Caco-2 (cell line): ENCODE measurements at regions of chr4 and their contacts with region 1.

Region 1: DNA sequence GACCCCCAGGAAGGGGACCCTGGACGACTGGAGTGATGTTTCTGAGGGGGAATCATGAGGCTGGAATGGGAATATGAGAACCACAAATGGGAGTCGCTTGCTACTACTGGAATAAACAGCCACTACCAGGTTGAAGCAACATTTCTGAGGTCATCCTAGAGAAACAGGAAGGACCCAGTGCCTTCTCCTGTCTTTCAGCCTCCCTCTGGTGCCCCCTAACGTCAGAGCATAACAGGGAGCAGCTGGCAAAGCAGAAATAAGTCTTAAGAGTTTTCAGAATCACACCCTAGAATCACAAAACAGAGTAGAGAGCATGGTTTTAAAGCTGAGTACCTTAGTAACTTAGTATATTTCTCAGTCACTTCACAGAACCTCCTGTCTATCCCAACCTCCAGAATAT is 347.8 kb upstream of the PITX2 start:
- DNase-seq: peak; percentile 79 to 85
- H3K4me3 ChIP-seq: no peak overlapping the region
- H3K4me3 Mint-ChIP-seq: no peak overlapping the region
- H3K27ac Mint-ChIP-seq: no peak overlapping the region
- H3K4me1 ChIP-seq: 0 out of 2 replicates have a peak, but pooled peaks cover 3% of the 10 kb centered on the region
- H3K4me1 Mint-ChIP-seq: no peaks in the 10 kb centered on the region
- H3K27me3 ChIP-seq: no peaks in the 10 kb centered on the region
- H3K27me3 Mint-ChIP-seq: no peaks in the 10 kb centered on the region
- CTCF ChIP-seq: peak; percentile 76 to 85

Region 2: DNA sequence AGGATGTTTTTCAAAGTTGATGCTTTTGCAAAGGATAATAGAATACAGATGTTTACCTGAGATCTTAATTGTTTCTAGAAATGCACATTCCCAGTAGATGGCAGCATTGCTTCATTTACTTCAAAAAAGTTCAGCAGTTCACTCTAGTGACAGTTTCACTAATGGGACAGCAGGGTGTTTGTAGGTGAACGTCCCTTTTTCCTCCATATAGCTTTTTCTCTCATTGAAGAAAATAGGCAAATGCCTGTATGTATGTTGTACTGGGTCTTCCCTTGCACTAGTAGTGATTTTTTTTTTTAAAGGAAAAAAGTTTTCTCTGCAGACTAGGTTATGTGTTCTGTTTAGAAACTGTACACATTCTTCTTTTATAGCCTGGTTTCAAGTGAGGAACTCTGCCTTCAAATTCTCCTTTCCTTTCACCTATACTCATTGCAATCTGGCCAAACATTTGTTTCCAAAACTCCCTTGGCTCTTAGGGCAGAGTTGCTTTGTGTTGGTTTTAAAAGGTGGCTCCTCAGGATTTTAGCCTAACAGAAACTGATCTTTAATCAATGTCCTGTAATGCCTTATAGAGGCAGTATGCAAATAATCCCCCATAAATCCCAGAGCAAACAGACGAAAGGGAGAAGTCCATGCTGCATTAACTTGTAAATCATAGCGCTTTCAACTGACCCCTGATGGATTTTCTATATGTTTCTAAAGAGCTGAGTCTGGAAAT is 971.6 kb before region 1 on chr4:
- CTCF ChIA-PET with region 1: no interaction called
- POLR2A ChIA-PET with region 1: no interaction called
- intact Hi-C with region 1: loop called (anchors 2 kb)
- DNase-seq: peak in 1 of 2 experiments; percentile 69
- H3K4me3 ChIP-seq: no peak overlapping the region
- H3K4me3 Mint-ChIP-seq: no peak overlapping the region
- H3K27ac Mint-ChIP-seq: no peak overlapping the region
- H3K4me1 ChIP-seq: peaks cover 6% of the 10 kb centered on the region
- H3K4me1 Mint-ChIP-seq: no peaks in the 10 kb centered on the region
- H3K27me3 ChIP-seq: no peaks in the 10 kb centered on the region
- H3K27me3 Mint-ChIP-seq: peaks cover 2% of the 10 kb centered on the region
- CTCF ChIP-seq: peak; percentile 44 to 73

Region 3: GRCh38 chr4:110516106-110516922 is 454.3 kb before region 1 on chr4:
- CTCF ChIA-PET with region 1: no interaction called
- POLR2A ChIA-PET with region 1: no interaction called
- intact Hi-C with region 1: loop called (anchors 5 kb)
- DNase-seq: peak; percentile 78
- H3K4me3 ChIP-seq: no peak overlapping the region
- H3K4me3 Mint-ChIP-seq: peak overlapping the region; percentile 64
- H3K27ac Mint-ChIP-seq: no peak overlapping the region
- H3K4me1 ChIP-seq: no peaks in the 10 kb centered on the region
- H3K4me1 Mint-ChIP-seq: no peaks in the 10 kb centered on the region
- H3K27me3 ChIP-seq: no peaks in the 10 kb centered on the region
- H3K27me3 Mint-ChIP-seq: no peaks in the 10 kb centered on the region
- CTCF ChIP-seq: peak; percentile 78 to 82

Region 4: DNA sequence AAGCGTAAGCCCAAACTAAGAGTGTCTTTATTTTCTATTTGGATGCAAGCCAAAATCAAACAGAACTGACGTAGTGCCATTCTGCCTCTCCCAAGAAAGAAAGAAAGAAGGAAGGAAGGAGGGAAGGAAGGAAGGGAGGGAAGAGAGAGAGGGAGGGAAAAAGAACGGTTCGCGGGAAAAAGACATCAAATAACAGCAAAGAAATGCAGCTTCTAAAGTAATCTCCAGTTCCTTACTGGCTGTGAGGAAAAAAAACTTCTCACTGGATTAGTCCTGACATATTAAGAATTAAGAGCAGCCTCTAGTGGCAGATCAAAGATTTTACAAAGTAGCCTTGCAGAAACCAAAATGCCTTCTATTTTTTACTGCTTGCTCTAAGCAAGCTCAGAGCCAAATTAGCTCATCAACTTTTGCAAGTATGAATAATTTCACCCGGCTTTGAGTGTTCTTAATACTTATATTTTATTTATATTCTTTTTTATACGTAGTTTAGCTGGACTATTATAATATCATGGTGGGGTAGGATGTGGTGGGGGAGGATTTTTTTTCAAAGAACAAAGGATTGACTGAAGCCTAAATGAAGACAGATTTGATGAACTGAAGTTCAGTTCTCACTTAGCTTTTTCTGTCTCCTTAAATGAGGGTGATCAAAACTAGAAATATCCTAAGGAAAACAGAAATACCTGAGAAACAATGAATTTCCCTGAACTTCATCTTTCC is 384.4 kb before region 1 on chr4:
- CTCF ChIA-PET with region 1: interaction called, 3 read pairs
- POLR2A ChIA-PET with region 1: no interaction called
- intact Hi-C with region 1: loop called (anchors 1 kb)
- DNase-seq: peak in 1 of 2 experiments; percentile 6
- H3K4me3 ChIP-seq: no peak overlapping the region
- H3K4me3 Mint-ChIP-seq: no peak overlapping the region
- H3K27ac Mint-ChIP-seq: no peak overlapping the region
- H3K4me1 ChIP-seq: no peaks in the 10 kb centered on the region
- H3K4me1 Mint-ChIP-seq: no peaks in the 10 kb centered on the region
- H3K27me3 ChIP-seq: no peaks in the 10 kb centered on the region
- H3K27me3 Mint-ChIP-seq: no peaks in the 10 kb centered on the region
- CTCF ChIP-seq: peak; percentile 40 to 52

Region 5: GRCh38 chr4:110636680-110637407 is 333.8 kb before region 1 on chr4:
- CTCF ChIA-PET with region 1: no interaction called
- POLR2A ChIA-PET with region 1: no interaction called
- intact Hi-C with region 1: loop called (anchors 5 kb)
- DNase-seq: peak; percentile 86
- H3K4me3 ChIP-seq: peak overlapping the region; percentile 73
- H3K4me3 Mint-ChIP-seq: peak overlapping the region; percentile 88
- H3K27ac Mint-ChIP-seq: peak overlapping the region; percentile 93
- H3K4me1 ChIP-seq: 0 out of 2 replicates have a peak, but pooled peaks cover 8% of the 10 kb centered on the region
- H3K4me1 Mint-ChIP-seq: peaks cover 20% of the 10 kb centered on the region
- H3K27me3 ChIP-seq: no peaks in the 10 kb centered on the region
- H3K27me3 Mint-ChIP-seq: no peaks in the 10 kb centered on the region
- CTCF ChIP-seq: no peak

Region 6: DNA sequence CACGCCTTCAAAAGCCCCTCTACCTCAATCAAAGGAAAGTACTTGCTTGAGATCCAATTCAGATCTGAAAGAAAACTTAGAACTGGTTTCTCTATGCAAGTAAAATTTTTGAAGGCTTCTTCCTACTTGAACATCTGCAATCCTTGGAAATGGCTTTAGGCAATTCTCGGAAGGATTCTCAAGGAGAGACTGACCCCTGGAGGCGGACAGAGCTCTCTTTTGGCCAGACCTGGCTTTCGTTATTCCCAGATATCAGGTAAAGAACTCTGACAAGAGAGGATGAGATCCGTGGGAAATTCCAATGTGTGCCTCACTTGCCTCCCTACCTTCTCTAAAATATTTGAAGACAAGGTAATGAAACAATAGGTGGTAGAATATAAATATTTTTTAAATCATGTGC is 504.4 kb after region 1 on chr4:
- CTCF ChIA-PET with region 1: no interaction called
- POLR2A ChIA-PET with region 1: no interaction called
- intact Hi-C with region 1: loop called (anchors 10 kb)
- DNase-seq: peak; percentile 50 to 62
- H3K4me3 ChIP-seq: no peak overlapping the region
- H3K4me3 Mint-ChIP-seq: no peak overlapping the region
- H3K27ac Mint-ChIP-seq: no peak overlapping the region
- H3K4me1 ChIP-seq: no peaks in the 10 kb centered on the region
- H3K4me1 Mint-ChIP-seq: no peaks in the 10 kb centered on the region
- H3K27me3 ChIP-seq: no peaks in the 10 kb centered on the region
- H3K27me3 Mint-ChIP-seq: no peaks in the 10 kb centered on the region
- CTCF ChIP-seq: peak; percentile 64 to 68